ENCODE measurements at regions of chr1 and their contacts with region 1.

Region 1: GRCh38 chr1:186915555-186915954 is 86.8 kb downstream of the PLA2G4A start:
- DNase-seq: no peak
- H3K4me3 Mint-ChIP-seq: no peak overlapping the region
- H3K27ac Mint-ChIP-seq: peak overlapping the region; percentile 52
- H3K4me1 Mint-ChIP-seq: peaks cover 30% of the 10 kb centered on the region
- H3K27me3 Mint-ChIP-seq: no peaks in the 10 kb centered on the region
- CTCF ChIP-seq: no peak

Region 2: DNA sequence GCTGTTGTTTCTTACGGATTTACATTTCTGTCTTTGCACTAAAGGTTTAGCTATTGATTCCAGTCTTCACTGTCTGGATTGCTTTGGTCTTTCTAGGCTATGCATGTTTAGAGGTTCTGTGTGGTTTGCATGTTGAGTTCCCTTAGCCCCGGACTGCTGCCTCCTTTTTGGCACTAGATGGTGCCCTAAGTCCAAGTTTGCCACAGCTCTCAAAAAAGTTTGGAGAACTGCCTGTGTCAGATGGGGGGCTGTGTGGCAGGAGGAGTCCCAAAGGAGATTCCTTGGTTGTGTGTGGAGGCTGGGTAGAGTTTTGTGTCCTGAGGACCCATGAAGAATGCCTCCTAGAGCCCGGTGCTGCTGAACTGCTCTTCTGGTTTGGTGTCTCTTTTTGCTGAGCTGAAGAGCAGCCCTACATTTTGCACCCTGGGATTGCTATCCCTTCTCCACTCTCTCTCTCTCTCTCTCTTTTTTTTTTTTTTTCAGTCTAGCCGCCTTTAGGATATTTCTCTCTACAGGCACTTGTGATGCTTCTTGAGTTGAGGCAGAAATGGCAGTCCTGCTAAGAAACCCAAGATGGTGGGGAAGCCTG is 309.7 kb before region 1 on chr1:
- CTCF ChIA-PET with region 1: interaction called, 5 read pairs
- intact Hi-C with region 1: loop called (anchors 5 kb)
- DNase-seq: peak; percentile 76
- H3K4me3 Mint-ChIP-seq: no peak overlapping the region
- H3K27ac Mint-ChIP-seq: peak overlapping the region; percentile 51
- H3K4me1 Mint-ChIP-seq: peaks cover 26% of the 10 kb centered on the region
- H3K27me3 Mint-ChIP-seq: no peaks in the 10 kb centered on the region
- CTCF ChIP-seq: peak; percentile 89

Region 3: GRCh38 chr1:186722711-186723309 is 192.7 kb before region 1 on chr1:
- CTCF ChIA-PET with region 1: interaction called, 4 read pairs
- intact Hi-C with region 1: loop called (anchors 10 kb)
- DNase-seq: peak; percentile 58
- H3K4me3 Mint-ChIP-seq: no peak overlapping the region
- H3K27ac Mint-ChIP-seq: no peak overlapping the region
- H3K4me1 Mint-ChIP-seq: no peaks in the 10 kb centered on the region
- H3K27me3 Mint-ChIP-seq: no peaks in the 10 kb centered on the region
- CTCF ChIP-seq: peak; percentile 31

Region 4: DNA sequence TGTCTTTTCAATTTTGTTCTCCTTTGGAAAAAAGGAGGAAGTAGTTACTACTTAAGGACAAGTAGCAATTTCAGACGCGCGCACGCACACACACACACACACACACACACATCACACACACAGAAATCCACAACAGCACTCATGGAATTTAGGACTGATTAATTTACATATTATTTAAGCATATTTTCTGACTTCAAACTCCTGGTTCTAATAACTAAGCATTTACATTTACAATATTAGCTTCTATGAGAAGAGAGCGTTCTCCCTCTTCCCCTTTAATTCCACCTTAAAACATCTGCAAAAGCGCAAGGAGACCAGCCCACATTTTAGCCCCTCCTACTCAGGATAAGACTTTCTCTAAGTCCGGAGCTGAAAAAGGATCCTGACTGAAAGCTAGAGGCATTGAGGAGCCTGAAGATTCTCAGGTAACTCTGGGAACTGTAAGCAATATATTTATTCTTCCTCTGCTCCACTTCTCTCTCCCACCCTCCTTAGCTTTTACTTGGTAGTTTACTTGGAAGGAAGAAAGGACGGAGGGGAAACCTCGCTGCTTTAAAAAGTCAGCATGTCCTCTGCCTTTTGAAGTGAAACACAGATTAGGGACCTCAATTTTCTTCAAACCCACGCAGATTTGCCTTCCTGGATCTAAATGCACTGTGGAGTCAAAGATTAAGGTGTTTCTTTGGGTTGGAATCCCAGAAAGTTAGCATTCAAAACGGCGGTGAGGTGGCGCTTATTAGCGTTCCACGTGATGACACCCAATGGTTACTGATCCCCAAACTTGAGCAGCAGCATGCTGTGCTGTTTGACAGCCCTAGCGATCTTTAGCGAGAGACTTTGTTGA is 86.7 kb before region 1 on chr1 and contains the start of gene PLA2G4A:
- CTCF ChIA-PET with region 1: interaction called, 3 read pairs
- intact Hi-C with region 1: loop called (anchors 5 kb)
- DNase-seq: peak; percentile 63
- H3K4me3 Mint-ChIP-seq: peak within 1 kb of the TSS; percentile 97
- H3K27ac Mint-ChIP-seq: peak within 1 kb of the TSS; percentile 90
- H3K4me1 Mint-ChIP-seq: peaks cover 23% of the 10 kb centered on the region
- H3K27me3 Mint-ChIP-seq: no peaks in the 10 kb centered on the region
- CTCF ChIP-seq: no peak
- total RNA-seq, gene PLA2G4A: 29.8 and 36.0 TPM in 2 replicates

Region 5: GRCh38 chr1:186849271-186849671 is 66.3 kb before region 1 on chr1:
- CTCF ChIA-PET with region 1: no interaction called
- intact Hi-C with region 1: loop called (anchors 5 kb)
- DNase-seq: peak; percentile 73
- H3K4me3 Mint-ChIP-seq: peak overlapping the region; percentile 37
- H3K27ac Mint-ChIP-seq: peak overlapping the region; percentile 88
- H3K4me1 Mint-ChIP-seq: peaks cover 39% of the 10 kb centered on the region
- H3K27me3 Mint-ChIP-seq: no peaks in the 10 kb centered on the region
- CTCF ChIP-seq: no peak

Region 6: DNA sequence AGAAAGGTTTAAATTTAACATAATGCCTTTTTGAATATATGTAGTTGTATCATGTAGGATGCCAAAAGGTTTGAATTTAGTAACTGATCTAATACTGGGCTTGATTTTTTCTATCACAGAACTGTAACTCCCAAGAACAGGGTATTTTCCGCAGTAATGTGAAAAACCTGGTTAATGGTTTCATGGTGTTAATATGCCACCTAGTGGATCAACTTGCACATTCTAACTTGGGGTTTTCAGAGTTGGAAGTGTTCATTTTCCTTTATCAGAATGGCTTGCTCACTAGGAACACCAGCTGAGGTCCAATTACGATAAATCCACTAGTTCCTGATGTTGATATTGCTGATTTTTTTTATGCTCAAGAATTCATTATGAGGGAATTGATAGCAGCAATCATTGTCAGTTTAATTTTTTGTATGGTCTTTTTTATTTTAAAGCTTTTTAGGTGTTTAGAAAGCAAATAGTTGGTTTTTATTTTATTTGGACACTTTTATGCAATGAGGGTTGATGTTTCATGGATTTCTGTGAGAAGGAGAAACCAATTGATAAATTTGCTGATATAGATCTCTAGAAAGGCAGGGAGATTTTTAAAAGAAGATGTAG is 70.4 kb after region 1 on chr1:
- CTCF ChIA-PET with region 1: interaction called, 9 read pairs
- intact Hi-C with region 1: loop called (anchors 1 kb)
- DNase-seq: peak; percentile 35
- H3K4me3 Mint-ChIP-seq: no peak overlapping the region
- H3K27ac Mint-ChIP-seq: peak overlapping the region; percentile 37
- H3K4me1 Mint-ChIP-seq: peaks cover 19% of the 10 kb centered on the region
- H3K27me3 Mint-ChIP-seq: no peaks in the 10 kb centered on the region
- CTCF ChIP-seq: peak; percentile 60